CD8-positive, alpha-beta T cell (primary cell): ENCODE measurements at regions of chr15 and their contacts with region 1.

Region 1: DNA sequence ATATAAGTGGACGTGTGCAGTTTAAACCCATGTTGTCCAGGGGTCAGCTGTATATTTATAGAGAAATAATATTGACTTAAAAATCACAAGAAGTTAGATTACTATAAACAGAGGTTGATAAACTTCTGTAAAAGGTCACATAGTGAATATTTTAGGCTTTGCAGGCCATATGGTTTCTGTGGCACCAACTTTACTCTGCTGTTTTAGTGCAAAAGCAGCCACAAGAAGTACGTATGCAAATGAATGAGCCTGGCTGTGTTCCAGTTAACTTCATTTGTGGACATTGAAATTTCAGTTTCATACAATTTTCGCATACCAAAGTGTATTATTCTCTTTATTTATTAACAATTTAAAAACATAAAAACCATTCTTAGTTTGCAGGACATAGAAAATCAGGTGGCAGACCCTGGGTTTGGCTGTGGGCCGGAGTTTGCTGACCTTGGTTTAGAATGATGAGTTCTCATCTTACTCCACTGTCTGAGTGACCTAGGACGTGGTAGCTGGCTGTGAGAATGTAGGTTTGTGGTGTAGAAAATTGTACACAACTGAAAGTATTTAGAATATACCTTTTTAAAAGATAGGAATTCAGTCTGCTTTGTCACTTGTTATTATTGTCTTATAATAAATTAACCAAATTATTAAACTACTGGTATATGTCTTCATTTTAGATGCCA is 16.3 kb downstream of the FAN1 start:
- DNase-seq: no peak
- ATAC-seq: no peak
- H3K4me3 ChIP-seq: no peak overlapping the region
- H3K4me3 Mint-ChIP-seq: no peak overlapping the region
- H3K27ac ChIP-seq: no peak overlapping the region
- H3K27ac Mint-ChIP-seq: no peak overlapping the region
- H3K4me1 ChIP-seq: no peaks in the 10 kb centered on the region
- H3K4me1 Mint-ChIP-seq: peaks cover 12% of the 10 kb centered on the region
- H3K27me3 ChIP-seq: no peaks in the 10 kb centered on the region
- H3K27me3 Mint-ChIP-seq: no peaks in the 10 kb centered on the region
- CTCF ChIP-seq: no peak

Region 2: GRCh38 chr15:30859091-30859874 is 60.7 kb before region 1 on chr15:
- CTCF ChIA-PET with region 1: interaction called, 3 read pairs
- POLR2A ChIA-PET with region 1: no interaction called
- intact Hi-C with region 1: loop called in 1 of 2 experiments (anchors 10 kb)
- DNase-seq: peak in 4 of 9 experiments; percentile 8 to 56 (median 33)
- ATAC-seq: peak; percentile 52
- H3K4me3 ChIP-seq: no peak overlapping the region
- H3K4me3 Mint-ChIP-seq: no peak overlapping the region
- H3K27ac ChIP-seq: no peak overlapping the region
- H3K27ac Mint-ChIP-seq: no peak overlapping the region
- H3K4me1 ChIP-seq: no peaks in the 10 kb centered on the region
- H3K4me1 Mint-ChIP-seq: no peaks in the 10 kb centered on the region
- H3K27me3 ChIP-seq: no peaks in the 10 kb centered on the region
- H3K27me3 Mint-ChIP-seq: no peaks in the 10 kb centered on the region
- CTCF ChIP-seq: peak; percentile 69